ENCODE measurements at regions of chr5 and their contacts with region 1.

Region 1: GRCh38 chr5:151740336-151740942 is 18.0 kb downstream of the ATOX1 start:
- DNase-seq: peak; percentile 91
- H3K4me3 ChIP-seq: no peak overlapping the region
- H3K27ac ChIP-seq: peak overlapping the region; percentile 31 to 47
- H3K4me1 ChIP-seq: peaks cover 50% of the 10 kb centered on the region
- H3K27me3 ChIP-seq: no peaks in the 10 kb centered on the region
- CTCF ChIP-seq: peak; percentile 95 to 99 (median 96)
- POLR2A ChIP-seq: no peak

Region 2: DNA sequence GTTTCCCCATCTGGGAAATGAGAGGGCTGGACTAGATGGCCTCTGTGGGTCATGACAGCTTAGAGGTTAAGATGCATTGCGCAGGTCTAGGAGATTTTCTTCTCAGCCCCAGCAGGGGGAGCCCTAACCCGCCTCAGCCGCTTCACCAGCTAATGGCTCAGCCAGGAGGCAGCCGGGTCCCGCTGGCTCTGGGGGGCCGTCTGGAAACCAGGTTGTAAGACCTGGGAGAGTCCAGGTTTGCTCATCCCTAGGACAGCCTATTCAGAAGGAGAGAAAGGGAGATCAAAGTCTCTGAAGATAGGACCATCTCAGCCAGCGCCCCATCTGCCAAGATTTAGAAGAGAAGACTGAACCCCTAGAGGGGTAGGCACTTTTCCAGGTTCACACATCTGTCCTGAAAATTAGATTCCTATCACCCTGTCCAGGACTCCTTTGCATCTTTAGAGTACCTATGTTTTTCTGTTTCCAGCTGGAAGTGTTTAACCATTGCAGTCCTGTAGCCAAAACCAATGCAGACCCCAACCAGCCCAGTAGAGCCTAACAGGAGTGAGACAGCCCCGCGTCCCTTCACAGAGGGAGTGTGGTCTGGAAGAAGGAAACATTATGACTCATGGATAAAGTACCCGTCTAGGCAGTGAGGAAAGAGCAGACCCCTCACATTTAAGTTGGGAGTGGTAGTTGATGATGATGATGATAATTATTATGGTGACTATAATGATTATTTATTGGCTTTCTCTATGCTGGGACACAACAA is 81.3 kb before region 1 on chr5:
- intact Hi-C with region 1: loop called (anchors 5 kb)
- DNase-seq: peak; percentile 80
- H3K4me3 ChIP-seq: no peak overlapping the region
- H3K27ac ChIP-seq: peak overlapping the region in 1 of 2 donors; percentile 55
- H3K4me1 ChIP-seq: peaks cover 19% of the 10 kb centered on the region
- H3K27me3 ChIP-seq: no peaks in the 10 kb centered on the region
- CTCF ChIP-seq: peak; percentile 83 to 90 (median 87)
- POLR2A ChIP-seq: no peak

Region 3: DNA sequence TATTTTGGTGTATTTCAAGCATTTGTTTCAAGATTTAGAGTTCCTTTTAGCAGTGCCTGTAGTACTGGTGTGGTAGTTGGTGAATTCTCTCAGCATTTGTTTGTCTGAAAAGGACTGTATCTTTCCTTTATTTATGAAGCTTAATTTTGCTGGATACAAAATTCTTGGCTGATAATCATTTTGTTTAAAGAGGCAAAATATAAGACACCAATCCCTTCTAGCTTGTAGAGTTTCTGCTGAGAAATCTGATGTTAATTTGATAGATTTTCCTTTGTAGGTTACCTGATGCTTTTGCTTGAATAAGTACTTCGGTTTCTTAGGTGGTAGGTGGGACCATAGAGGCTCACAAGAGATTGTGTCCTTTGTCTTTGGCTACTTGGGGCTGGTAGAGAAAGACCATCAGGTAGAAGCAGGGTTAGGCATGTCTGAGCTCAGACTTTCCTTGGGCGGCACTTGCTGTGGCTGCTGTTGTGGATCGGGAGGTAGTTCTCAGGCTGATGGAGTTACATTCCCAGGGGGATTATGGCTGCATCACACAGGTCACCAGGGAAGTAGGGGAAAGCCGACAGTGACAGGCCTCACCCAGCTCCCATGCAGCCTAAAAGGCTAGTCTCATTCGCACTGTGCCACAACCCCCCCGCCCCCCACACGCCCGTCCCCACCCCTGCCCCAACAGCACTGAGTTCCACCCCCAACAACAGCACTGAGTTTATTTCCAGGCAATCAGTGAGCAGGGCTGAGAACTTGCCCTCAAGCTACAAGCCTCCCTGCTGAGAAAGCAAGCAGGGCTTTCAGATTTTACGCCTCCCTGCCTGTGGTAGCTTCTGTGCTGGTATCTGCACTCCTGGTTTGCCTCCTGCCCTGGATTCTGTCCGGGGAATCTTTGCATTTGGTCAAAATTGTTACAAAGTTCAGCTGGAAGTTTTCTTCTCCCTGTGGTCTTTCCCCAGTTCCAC is 311.3 kb after region 1 on chr5:
- intact Hi-C with region 1: no loop called
- DNase-seq: no peak
- H3K4me3 ChIP-seq: no peak overlapping the region
- H3K27ac ChIP-seq: no peak overlapping the region
- H3K4me1 ChIP-seq: no peaks in the 10 kb centered on the region
- H3K27me3 ChIP-seq: no peaks in the 10 kb centered on the region
- CTCF ChIP-seq: no peak
- POLR2A ChIP-seq: no peak